Activated CD4-positive, alpha-beta T cell treated with anti-CD3 and anti-CD28 coated beads for 36 hours (primary cell): ENCODE measurements at regions of chr3 and their contacts with region 1.

Region 1: DNA sequence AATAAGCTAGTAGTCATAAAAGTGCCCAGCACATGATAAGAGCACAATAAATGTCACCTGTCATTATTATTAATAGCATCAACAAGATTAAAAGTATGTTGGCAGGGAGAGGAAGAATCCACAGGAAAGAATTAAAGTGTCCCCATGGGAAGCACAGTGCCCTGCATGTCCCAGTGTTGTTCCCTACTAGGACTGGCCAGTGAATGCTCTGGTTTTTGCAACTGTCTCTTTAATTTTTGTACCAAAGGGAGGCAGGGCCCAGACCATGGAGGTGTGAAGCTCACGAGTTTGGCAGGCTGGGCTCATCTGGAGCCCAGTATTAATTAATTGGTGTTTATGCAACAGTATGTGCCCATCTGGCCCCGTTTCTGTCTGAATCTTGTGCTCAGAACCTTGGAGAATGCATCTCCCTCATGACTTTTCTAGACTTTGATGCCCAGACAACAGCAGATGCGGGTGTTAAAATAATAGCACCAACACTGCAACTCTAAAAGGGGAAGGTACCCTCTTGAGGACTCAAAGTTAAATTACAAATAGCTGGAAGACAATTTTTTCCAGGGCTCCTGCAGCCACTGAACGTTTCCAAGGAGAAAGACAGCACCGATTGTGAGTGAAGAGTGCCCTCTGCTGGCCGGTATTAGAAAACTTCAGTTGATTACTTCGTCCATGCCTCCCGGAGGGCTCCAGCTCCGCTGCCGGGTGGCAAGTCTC is 71.9 kb upstream of the SPATA12 start:
- DNase-seq: peak; percentile 84
- ATAC-seq: peak; percentile 72
- H3K4me3 Mint-ChIP-seq: no peak overlapping the region
- H3K27ac Mint-ChIP-seq: no peak overlapping the region
- H3K4me1 Mint-ChIP-seq: peaks cover 23% of the 10 kb centered on the region
- H3K27me3 Mint-ChIP-seq: peaks cover 12% of the 10 kb centered on the region

Region 2: DNA sequence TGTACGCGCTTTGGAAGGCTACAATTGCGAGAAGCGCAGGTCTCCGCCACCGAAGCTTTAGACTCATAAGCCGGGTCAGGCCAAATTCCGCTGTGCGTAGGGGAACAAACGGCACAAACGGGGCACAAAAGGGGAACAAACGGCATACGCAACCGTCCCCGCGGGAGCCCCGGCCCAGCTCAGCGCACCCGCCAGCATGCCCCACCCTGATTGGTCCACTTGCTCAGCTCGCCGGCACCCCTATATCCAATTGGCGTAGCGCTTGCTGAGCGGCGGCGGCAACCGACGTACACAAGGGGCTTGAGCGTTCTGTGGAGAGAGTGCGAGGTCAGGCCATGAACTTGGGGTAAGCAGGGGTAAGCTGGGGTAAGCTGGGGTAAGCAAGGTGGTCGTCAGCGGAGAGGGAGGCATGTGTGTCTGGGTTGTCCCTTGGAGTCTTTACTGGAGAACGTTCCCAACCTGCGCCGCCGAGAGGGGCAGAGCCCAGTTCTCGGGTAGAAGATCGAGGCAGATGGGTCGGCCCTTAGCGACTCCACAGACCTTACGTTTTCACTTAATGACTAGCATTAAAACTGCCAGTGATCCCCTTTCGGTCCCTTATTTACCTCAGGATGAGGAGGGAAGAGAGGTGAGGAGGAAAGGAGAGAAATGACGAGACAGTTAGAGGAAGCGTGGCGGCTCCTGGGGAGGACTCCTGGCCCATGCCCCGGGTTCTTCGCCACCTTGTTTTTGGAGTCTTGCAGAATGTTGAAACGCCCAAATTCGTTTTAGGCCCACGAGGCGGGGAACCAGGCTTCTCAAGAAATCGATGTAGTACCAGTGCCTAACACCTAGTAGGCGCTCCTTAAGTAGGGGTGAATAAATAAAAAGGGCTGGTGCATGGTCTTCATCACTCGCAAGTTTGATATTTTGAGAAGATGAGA is 431.4 kb before region 1 on chr3 and contains the start of gene CCDC66:
- CTCF ChIA-PET with region 1: no interaction called
- POLR2A ChIA-PET with region 1: no interaction called
- intact Hi-C with region 1: loop called in 1 of 2 experiments (anchors 1 kb)
- DNase-seq: peak; percentile 97
- ATAC-seq: peak; percentile 97
- H3K4me3 Mint-ChIP-seq: peak within 1 kb of the TSS; percentile 93
- H3K27ac Mint-ChIP-seq: peak within 1 kb of the TSS; percentile 99
- H3K4me1 Mint-ChIP-seq: peaks cover 20% of the 10 kb centered on the region
- H3K27me3 Mint-ChIP-seq: no peaks in the 10 kb centered on the region
- total RNA-seq, gene CCDC66: 23.5 to 28.5 TPM

Region 3: GRCh38 chr3:56737006-56737405 is 251.6 kb before region 1 on chr3:
- CTCF ChIA-PET with region 1: interaction called, 13 read pairs
- POLR2A ChIA-PET with region 1: no interaction called
- intact Hi-C with region 1: no loop called
- DNase-seq: no peak
- ATAC-seq: no peak
- H3K4me3 Mint-ChIP-seq: no peak overlapping the region
- H3K27ac Mint-ChIP-seq: no peak overlapping the region
- H3K4me1 Mint-ChIP-seq: peaks cover 32% of the 10 kb centered on the region
- H3K27me3 Mint-ChIP-seq: no peaks in the 10 kb centered on the region

Region 4: DNA sequence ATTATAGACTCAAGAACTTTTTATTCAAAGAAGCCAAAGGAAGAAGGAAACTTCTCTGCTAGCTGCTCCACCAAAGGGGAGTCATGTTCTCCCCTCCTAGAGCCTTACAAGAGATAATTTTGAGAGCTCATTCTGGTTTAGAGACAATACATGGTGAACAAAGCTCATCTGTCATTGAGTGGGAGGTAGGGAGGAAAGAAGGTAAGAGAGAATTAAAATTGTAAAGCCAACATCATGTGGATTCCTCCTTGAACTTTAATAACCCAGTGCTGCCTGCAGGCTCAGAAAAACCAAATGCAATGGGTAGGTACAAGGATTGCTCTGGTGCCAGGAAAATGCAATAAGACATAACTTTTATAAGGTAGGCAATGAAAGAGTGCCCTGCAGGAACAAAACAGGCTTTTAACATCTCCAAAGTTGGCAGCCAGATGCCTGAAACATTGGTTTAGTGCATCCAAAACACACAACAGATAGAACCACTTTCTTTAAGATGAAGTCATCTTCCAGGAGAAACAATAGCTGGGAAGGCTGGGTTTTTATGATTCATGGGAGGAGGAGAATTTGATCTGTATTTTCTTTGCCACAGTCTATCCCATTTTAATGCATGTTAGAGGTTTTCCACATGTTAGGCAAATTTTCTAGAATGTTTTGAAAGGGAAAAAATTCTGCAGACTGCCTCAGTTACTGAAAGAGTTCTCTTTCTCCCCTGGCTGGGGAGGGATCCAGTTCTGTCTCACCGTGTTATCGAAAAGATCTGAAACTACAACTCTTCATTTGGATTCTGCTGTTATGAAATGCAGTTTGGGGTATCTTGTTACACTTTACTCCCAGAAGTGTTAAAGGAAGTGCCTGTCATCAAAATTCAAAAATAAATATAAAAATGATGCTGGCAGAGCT is 175.6 kb before region 1 on chr3:
- CTCF ChIA-PET with region 1: interaction called, 13 read pairs
- POLR2A ChIA-PET with region 1: interaction called, 3 read pairs
- intact Hi-C with region 1: no loop called
- DNase-seq: no peak
- ATAC-seq: no peak
- H3K4me3 Mint-ChIP-seq: peak overlapping the region; percentile 3
- H3K27ac Mint-ChIP-seq: peak overlapping the region; percentile 17
- H3K4me1 Mint-ChIP-seq: peaks cover 60% of the 10 kb centered on the region
- H3K27me3 Mint-ChIP-seq: no peaks in the 10 kb centered on the region

Region 5: GRCh38 chr3:56855856-56856512 is 132.6 kb before region 1 on chr3:
- CTCF ChIA-PET with region 1: interaction called, 19 read pairs
- POLR2A ChIA-PET with region 1: no interaction called
- intact Hi-C with region 1: loop called (anchors 1 kb)
- DNase-seq: peak; percentile 68
- ATAC-seq: peak; percentile 53
- H3K4me3 Mint-ChIP-seq: no peak overlapping the region
- H3K27ac Mint-ChIP-seq: no peak overlapping the region
- H3K4me1 Mint-ChIP-seq: peaks cover 52% of the 10 kb centered on the region
- H3K27me3 Mint-ChIP-seq: no peaks in the 10 kb centered on the region

Region 6: GRCh38 chr3:56878074-56878473 is 110.5 kb before region 1 on chr3:
- CTCF ChIA-PET with region 1: interaction called, 19 read pairs
- POLR2A ChIA-PET with region 1: no interaction called
- intact Hi-C with region 1: loop called in 1 of 2 experiments (anchors 5 kb)
- DNase-seq: peak; percentile 79
- ATAC-seq: peak; percentile 87
- H3K4me3 Mint-ChIP-seq: peak overlapping the region; percentile 64
- H3K27ac Mint-ChIP-seq: peak overlapping the region; percentile 94
- H3K4me1 Mint-ChIP-seq: peaks cover 90% of the 10 kb centered on the region
- H3K27me3 Mint-ChIP-seq: no peaks in the 10 kb centered on the region

Region 7: GRCh38 chr3:57041604-57042086 is 53.0 kb after region 1 on chr3:
- CTCF ChIA-PET with region 1: no interaction called
- POLR2A ChIA-PET with region 1: no interaction called
- intact Hi-C with region 1: no loop called
- DNase-seq: no peak
- ATAC-seq: no peak
- H3K4me3 Mint-ChIP-seq: no peak overlapping the region
- H3K27ac Mint-ChIP-seq: no peak overlapping the region
- H3K4me1 Mint-ChIP-seq: no peaks in the 10 kb centered on the region
- H3K27me3 Mint-ChIP-seq: peaks cover 5% of the 10 kb centered on the region